ENCODE measurements at regions of chr15 and their contacts with region 1.

Region 1: GRCh38 chr15:68154923-68155559 is 50.1 kb downstream of the CALML4 start:
- DNase-seq: peak; percentile 53
- ATAC-seq: no peak
- H3K4me3 ChIP-seq: no peak overlapping the region
- H3K27ac ChIP-seq: no peak overlapping the region
- H3K4me1 ChIP-seq: peaks cover 8% of the 10 kb centered on the region
- H3K27me3 ChIP-seq: no peaks in the 10 kb centered on the region
- CTCF ChIP-seq: peak; percentile 74
- EP300 ChIP-seq: no peak
- POLR2A ChIP-seq: no peak
- RAD21 ChIP-seq: peak; percentile 68; the same call in 1 of the 2 replicates

Region 2: DNA sequence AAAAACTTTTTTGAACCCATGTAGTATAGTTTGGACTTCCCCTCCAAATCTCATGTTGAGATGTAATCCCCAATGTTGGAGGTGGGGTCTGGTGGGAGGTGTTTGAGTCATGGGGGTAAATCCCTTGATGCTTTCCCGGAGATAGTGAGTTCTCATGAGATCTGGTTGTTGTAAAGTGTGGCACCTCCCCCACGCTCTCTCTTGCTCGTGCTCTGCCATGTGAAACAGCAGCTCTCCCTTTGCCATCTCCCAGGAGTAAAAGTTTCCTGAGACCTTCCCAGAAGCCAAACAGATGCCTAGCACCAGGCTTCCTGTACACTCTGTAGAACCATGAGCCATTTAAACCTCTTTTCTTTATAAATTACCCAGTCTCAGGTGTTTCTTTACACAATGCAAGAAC is 299.2 kb before region 1 on chr15:
- CTCF ChIA-PET with region 1: no interaction called
- POLR2A ChIA-PET with region 1: interaction called, 3 read pairs
- in situ Hi-C with region 1: loop called (anchors 5 kb)
- intact Hi-C with region 1: no loop called
- DNase-seq: no peak
- ATAC-seq: no peak
- H3K4me3 ChIP-seq: no peak overlapping the region
- H3K27ac ChIP-seq: no peak overlapping the region
- H3K4me1 ChIP-seq: peaks cover 74% of the 10 kb centered on the region
- H3K27me3 ChIP-seq: no peaks in the 10 kb centered on the region
- CTCF ChIP-seq: no peak
- EP300 ChIP-seq: no peak
- POLR2A ChIP-seq: no peak
- RAD21 ChIP-seq: no peak

Region 3: GRCh38 chr15:67863442-67863987 is 291.5 kb before region 1 on chr15:
- CTCF ChIA-PET with region 1: interaction called, 21 read pairs
- POLR2A ChIA-PET with region 1: interaction called, 4 read pairs
- in situ Hi-C with region 1: loop called (anchors 5 kb)
- intact Hi-C with region 1: loop called (anchors 1 kb)
- DNase-seq: peak; percentile 66
- ATAC-seq: peak; percentile 98
- H3K4me3 ChIP-seq: peak overlapping the region; percentile 41 to 74 (median 46); a peak in 5 of 6 replicates
- H3K27ac ChIP-seq: peak overlapping the region; percentile 53
- H3K4me1 ChIP-seq: peaks cover 34% of the 10 kb centered on the region
- H3K27me3 ChIP-seq: no peaks in the 10 kb centered on the region
- CTCF ChIP-seq: peak; percentile 97
- EP300 ChIP-seq: 0 out of 4 replicates have a peak, but pooled peaks of 1 of the 2 experiments have one; percentile 19
- POLR2A ChIP-seq: no peak; a peak in 1 of 4 replicates
- RAD21 ChIP-seq: peak; percentile 99

Region 4: DNA sequence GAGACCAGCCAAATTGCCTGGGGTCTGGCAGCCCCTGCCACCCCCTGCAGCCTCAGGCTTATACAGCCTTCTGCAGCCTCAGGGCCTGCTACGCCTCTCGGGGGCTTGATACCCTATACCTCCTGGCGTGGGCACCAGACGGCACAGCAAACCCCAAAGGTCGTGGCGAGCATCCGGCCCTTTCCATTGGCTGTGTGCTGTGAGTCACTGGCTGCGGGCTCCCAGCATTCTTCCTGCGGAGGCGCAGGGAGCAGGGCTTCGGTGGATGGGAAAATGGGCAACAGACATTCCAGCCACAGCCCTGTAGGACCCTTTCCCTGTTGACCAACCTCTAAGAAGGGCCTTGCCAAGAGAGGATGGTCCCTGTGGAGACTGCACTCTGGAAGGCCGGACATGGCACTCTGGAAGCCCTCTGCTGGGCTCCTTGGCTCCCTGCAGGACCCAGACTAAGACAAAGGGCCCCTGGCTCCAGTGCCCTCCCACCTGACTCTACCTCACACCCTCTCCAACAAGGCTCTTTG is 217.3 kb after region 1 on chr15:
- CTCF ChIA-PET with region 1: no interaction called
- POLR2A ChIA-PET with region 1: no interaction called
- in situ Hi-C with region 1: no loop called
- intact Hi-C with region 1: no loop called
- DNase-seq: peak; percentile 16
- ATAC-seq: peak; percentile 95
- H3K4me3 ChIP-seq: no peak overlapping the region
- H3K27ac ChIP-seq: no peak overlapping the region
- H3K4me1 ChIP-seq: no peaks in the 10 kb centered on the region
- H3K27me3 ChIP-seq: peaks cover 1 to 6% of the 10 kb centered on the region in 2 experiments; a peak in 2 of 5 replicates
- CTCF ChIP-seq: peak; percentile 48
- EP300 ChIP-seq: no peak
- POLR2A ChIP-seq: no peak
- RAD21 ChIP-seq: no peak; the same call in 1 of the 2 replicates